Activated CD4-positive, alpha-beta T cell treated with anti-CD3 and anti-CD28 coated beads, Interleukin-2, amount 10 ng/mL, durations not matched to agents 24 days and 14 days (primary cell): ENCODE measurements at regions of chr7 and their contacts with region 1.

Region 1: GRCh38 chr7:102834999-102835398 is 77.8 kb upstream of the LRRC17 start:
- DNase-seq: peak; percentile 66
- H3K4me3 Mint-ChIP-seq: no peak overlapping the region
- H3K27ac Mint-ChIP-seq: peak overlapping the region; percentile 17
- H3K4me1 Mint-ChIP-seq: peaks cover 8% of the 10 kb centered on the region
- H3K27me3 Mint-ChIP-seq: peaks cover 6% of the 10 kb centered on the region

Region 2: DNA sequence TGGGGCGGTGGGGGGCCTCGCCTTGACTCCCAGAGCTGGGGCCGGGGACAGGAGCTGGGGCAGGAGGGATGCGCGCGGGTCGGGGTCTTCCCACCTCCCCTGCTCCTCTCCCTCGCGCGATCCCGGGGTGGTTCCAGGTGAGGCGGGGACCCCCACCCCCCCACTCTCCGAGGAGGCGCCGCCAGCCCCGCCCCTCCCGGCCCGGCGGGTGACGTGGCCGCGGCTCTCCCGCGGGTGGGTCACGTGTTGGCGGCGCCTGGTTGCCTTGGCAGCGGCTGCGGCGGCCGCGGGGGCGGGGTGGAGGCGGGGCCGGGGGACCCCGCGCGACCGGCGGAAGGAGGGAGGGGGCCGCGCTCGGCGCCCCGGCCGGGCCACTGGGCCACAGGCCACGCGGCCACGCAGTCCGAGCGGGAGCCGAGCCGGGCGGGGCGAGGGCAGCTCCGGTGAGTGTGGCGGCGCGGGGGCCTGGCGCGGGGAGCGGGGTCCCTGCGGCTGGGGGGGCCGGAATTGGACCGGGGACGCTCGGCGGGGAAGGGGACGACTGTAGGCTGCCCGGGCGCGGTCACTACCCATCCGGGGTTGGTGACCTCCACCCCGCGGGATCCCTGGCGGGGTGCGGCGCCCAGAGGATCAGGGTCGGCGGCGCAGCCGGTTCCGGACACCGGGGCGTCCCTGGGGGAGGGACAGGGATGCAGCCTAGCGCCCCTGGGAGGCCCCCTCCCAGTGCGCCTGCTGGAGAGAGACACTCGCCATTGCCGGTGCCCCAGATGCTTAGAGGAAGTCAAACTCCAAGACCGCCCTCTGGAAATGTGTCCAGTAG is 401.6 kb before region 1 on chr7 and contains the start of gene ORAI2:
- intact Hi-C with region 1: no loop called
- DNase-seq: peak; percentile 96
- H3K4me3 Mint-ChIP-seq: peak within 1 kb of the TSS; percentile 92
- H3K27ac Mint-ChIP-seq: peak within 1 kb of the TSS; percentile 92
- H3K4me1 Mint-ChIP-seq: peaks cover 51% of the 10 kb centered on the region
- H3K27me3 Mint-ChIP-seq: no peaks in the 10 kb centered on the region
- total RNA-seq, gene ORAI2: 45.8 and 49.8 TPM in 2 replicates

Region 3: GRCh38 chr7:102874166-102874829 is 39.3 kb after region 1 on chr7:
- intact Hi-C with region 1: loop called (anchors 1 kb)
- DNase-seq: peak; percentile 78
- H3K4me3 Mint-ChIP-seq: peak overlapping the region; percentile 26
- H3K27ac Mint-ChIP-seq: no peak overlapping the region
- H3K4me1 Mint-ChIP-seq: peaks cover 38% of the 10 kb centered on the region
- H3K27me3 Mint-ChIP-seq: peaks cover 10% of the 10 kb centered on the region

Region 4: GRCh38 chr7:102889851-102890250 is 54.9 kb after region 1 on chr7:
- intact Hi-C with region 1: no loop called
- DNase-seq: no peak
- H3K4me3 Mint-ChIP-seq: no peak overlapping the region
- H3K27ac Mint-ChIP-seq: no peak overlapping the region
- H3K4me1 Mint-ChIP-seq: no peaks in the 10 kb centered on the region
- H3K27me3 Mint-ChIP-seq: peaks cover 6% of the 10 kb centered on the region